Left cardiac atrium (tissue), 4 donors: ENCODE measurements at regions of chr11 and their contacts with region 1.

Region 1: DNA sequence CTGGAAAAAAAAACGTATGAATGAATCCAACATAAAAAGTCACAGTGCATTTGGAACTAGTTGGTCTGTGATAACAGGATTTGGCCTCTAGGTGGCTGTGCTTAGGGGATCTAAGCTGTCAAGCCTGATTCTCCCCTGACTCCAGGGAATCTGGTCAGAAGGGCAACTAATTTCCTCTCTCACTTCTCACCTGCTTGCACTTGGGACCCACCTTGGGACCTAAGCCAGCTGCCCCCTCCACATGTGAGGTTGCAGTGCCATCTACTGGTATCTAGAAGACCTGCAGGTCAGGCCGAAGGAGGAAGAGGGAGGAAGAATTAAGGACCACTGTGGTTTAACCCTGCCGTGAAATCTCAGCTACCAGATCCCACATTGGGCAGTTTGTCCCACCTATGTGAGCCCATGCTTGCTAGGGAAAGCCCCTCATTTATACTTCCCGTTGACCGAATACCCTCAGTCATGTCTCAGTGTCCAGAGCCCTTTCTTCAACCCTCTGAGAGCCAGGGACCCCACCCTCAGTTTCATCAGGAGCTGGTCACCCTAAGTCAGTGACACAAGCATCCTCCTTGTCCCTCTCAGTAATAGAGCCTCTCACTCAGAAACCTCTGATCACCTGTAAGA is 33.2 kb upstream of the CAVIN3 start:
- DNase-seq: peak; percentile 41
- ATAC-seq: peak; percentile 68 to 71

Region 2: DNA sequence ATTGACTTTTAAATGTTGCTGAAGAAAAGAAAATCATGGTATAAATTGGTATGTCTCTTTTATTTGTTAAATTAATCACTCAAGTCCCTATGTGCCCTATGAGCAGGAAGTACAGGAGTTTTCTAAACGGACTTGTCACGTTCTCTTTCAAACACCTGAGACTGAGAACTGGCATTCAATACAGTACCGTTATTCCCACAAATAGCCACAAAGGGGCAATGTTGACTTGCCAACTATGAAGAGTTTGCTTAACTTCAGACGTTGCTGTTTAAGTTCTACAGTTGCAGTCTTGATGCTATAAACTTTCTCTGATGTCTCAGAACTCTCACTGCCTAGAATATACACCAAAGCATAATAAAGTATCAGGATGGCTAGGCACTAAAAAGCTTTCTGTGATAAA is 330.5 kb before region 1 on chr11:
- intact Hi-C with region 1: loop called (anchors 2 to 10 kb)
- DNase-seq: no peak
- ATAC-seq: peak; percentile 74 to 76

Region 3: DNA sequence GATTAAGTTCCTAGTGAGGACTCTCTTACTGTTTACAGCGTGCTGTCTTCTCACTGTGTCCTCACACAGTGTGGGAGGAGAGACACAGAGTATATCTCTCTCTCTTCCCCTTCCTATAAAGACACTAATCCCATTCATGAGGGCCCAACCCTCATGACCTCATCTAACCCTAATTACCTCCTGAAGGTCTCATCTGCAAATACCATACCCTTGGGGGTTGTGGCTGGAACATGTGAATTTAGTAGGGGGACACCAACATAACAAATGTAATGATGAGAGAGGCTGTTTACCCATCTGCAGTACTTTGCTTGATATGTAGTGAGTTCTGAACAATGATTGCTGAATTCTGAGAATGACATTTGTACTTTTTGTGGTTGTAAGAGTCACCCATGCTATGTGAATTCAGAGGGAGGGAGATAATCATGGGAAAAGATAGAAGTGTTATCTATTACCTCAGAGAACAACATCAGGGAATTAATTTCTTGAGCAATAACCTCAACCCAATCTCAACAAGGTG is 159.4 kb before region 1 on chr11:
- intact Hi-C with region 1: no loop called
- DNase-seq: no peak
- ATAC-seq: no peak

Region 4: GRCh38 chr11:6251120-6251733 is 102.2 kb before region 1 on chr11:
- intact Hi-C with region 1: loop called in 1 of 2 experiments (anchors 1 kb)
- DNase-seq: peak; percentile 58
- ATAC-seq: peak; percentile 79 to 83

Region 5: GRCh38 chr11:6298605-6299004 is 54.9 kb before region 1 on chr11:
- intact Hi-C with region 1: loop called in 1 of 2 experiments (anchors 5 kb)
- DNase-seq: peak; percentile 32
- ATAC-seq: peak; percentile 71 to 75

Region 6: GRCh38 chr11:6315811-6316425 is 37.6 kb before region 1 on chr11:
- intact Hi-C with region 1: loop called in 1 of 2 experiments (anchors 5 kb)
- DNase-seq: peak; percentile 66
- ATAC-seq: peak in 1 of 2 donors; percentile 4